ENCODE measurements at regions of chr5 and their contacts with region 1.

Region 1: GRCh38 chr5:180291943-180292831 is at the start of gene MAPK9:
- DNase-seq: no peak
- H3K4me3 ChIP-seq: peak within 1 kb of the TSS; percentile 70
- H3K27me3 ChIP-seq: no peaks in the 10 kb centered on the region
- CTCF ChIP-seq: no peak
- polyA plus RNA-seq, gene MAPK9: 31.6 and 35.0 TPM in 2 replicates

Region 2: GRCh38 chr5:180274695-180275094 is 17.5 kb before region 1 on chr5:
- CTCF ChIA-PET with region 1: interaction called, 19 read pairs
- POLR2A ChIA-PET with region 1: interaction called, 3 read pairs
- DNase-seq: no peak
- H3K4me3 ChIP-seq: no peak overlapping the region
- H3K27me3 ChIP-seq: no peaks in the 10 kb centered on the region
- CTCF ChIP-seq: no peak

Region 3: GRCh38 chr5:180315762-180316212 is 23.6 kb after region 1 on chr5:
- CTCF ChIA-PET with region 1: interaction called, 19 read pairs
- POLR2A ChIA-PET with region 1: no interaction called
- DNase-seq: no peak
- H3K4me3 ChIP-seq: no peak overlapping the region
- H3K27me3 ChIP-seq: no peaks in the 10 kb centered on the region
- CTCF ChIP-seq: peak; percentile 93

Region 4: GRCh38 chr5:180343831-180344327 is 51.7 kb after region 1 on chr5:
- CTCF ChIA-PET with region 1: interaction called, 14 read pairs
- POLR2A ChIA-PET with region 1: no interaction called
- DNase-seq: no peak
- H3K4me3 ChIP-seq: no peak overlapping the region
- H3K27me3 ChIP-seq: no peaks in the 10 kb centered on the region
- CTCF ChIP-seq: no peak

Region 5: DNA sequence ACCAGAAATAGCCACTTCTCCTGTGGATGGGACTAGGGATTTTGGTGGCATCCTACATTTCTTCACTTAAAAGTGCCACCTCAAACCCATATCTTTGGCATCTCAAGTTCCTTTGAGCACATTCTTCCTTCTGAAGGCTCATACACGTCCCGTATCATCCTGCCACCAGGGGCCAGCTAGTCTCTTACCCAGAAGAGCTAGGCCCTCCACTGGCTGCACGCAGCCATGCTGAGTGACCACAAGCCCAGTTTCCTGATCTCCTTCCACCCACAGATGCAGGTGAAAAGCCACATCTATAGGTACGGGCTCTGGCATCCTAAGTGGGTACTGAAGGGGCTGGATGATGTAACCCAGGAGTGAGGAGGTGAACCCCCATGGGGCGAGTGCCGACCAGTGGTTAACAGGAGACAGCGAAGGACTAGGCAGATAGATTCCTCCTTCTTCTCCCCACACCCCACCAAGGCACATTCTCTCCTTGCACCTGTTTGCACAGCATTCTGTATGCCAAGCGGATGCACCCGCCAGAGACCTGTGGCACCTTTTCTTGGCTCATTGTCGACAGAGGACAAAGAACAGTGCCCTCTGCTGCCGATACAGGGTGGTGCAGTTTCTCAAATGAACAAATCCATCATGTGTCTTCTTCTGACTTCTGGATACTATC is 313.5 kb after region 1 on chr5:
- CTCF ChIA-PET with region 1: interaction called, 19 read pairs
- POLR2A ChIA-PET with region 1: no interaction called
- DNase-seq: no peak
- H3K4me3 ChIP-seq: no peak overlapping the region
- H3K27me3 ChIP-seq: no peaks in the 10 kb centered on the region
- CTCF ChIP-seq: peak; percentile 78

Region 6: DNA sequence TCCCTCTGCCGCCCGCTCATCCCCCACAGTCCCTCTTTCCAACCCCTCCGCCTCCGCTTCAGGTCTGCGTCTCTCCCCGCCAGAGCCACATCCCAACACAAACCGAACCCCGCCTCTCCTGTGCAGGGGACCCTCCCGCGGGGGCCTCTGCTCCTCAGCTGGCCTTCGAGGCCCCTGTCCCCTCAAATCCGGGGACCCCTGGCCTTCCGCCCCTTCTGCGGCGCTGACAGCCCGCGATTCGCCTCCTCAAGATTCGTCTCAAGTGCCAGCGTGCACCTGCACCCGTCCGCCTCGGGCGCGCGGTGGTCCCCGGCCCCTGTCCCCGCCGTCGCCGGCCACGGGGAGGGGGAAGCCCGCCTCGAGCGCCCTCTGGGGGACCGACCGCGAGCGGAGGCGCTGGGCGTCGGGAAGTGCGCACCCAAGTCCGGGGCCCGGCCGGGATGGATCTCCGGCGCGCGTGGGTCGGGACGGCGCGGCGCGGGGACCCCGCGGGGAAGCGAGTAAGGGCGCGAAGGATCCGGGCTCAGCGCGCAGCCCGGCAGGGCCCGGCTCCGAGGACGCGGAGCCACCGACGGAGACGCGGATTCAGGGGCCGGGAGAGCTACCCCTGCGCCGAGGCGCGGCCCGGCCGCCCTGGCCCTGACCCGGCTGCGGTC is 356.6 kb after region 1 on chr5:
- CTCF ChIA-PET with region 1: no interaction called
- POLR2A ChIA-PET with region 1: no interaction called
- DNase-seq: no peak
- H3K4me3 ChIP-seq: no peak overlapping the region
- H3K27me3 ChIP-seq: peaks cover 11% of the 10 kb centered on the region
- CTCF ChIP-seq: no peak

Measured in BJ (cell line).